B cell (primary cell): ENCODE measurements at regions of chr16 and their contacts with region 1.

Region 1: DNA sequence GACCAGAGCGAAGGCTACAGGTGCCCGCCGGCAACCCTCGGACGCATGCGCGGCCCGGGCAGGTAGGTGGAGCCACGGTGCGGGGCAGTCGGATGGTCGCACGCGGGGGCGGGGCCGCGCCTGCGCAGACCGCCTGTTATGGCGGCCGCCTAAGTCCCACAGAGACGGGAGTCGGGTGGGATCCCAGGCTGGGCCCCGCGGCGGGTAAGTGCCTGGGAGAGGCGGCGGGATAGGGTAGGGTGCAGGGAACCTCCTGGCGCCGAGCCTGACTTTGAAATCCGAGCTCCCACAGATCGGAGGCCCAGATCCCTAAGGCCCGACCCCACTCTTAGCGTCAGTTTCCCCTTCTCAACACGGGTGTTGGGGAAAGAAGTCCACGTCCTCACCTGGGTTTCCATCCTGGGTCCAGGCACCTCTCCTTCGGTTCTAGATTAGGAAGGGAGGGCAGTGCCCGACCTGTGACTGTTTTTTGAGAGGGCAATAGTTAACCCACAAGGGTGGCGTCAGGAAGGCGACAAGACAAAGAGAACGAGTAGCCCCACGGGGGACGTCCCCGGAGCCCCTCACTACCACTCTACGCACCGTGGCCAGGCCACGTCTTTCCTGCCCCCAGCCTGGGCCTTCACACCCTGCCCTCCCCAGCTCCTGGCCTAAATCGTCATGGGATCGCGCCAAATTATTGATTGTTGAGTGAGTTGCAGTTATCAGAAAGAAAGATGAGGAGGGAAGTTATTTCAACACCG is at the start of gene METTL22:
- DNase-seq: peak; percentile 94
- ATAC-seq: peak; percentile 99
- H3K4me3 ChIP-seq: peak within 1 kb of the TSS; percentile 88 to 100 (median 98)
- H3K4me3 Mint-ChIP-seq: peak within 1 kb of the TSS; percentile 94
- H3K27ac ChIP-seq: peak within 1 kb of the TSS; percentile 75 to 86
- H3K27ac Mint-ChIP-seq: peak within 1 kb of the TSS; percentile 86
- H3K4me1 ChIP-seq: peaks cover 12 to 15% of the 10 kb centered on the region in 2 donors
- H3K4me1 Mint-ChIP-seq: peaks cover 21% of the 10 kb centered on the region
- H3K27me3 ChIP-seq: peaks cover 0 to 6% (median 0%) of the 10 kb centered on the region in 4 experiments
- H3K27me3 Mint-ChIP-seq: peaks cover 9% of the 10 kb centered on the region
- CTCF ChIP-seq: no peak
- total RNA-seq, gene METTL22: 62.9 and 73.8 TPM in 2 replicates

Region 2: GRCh38 chr16:8567750-8568617 is 53.8 kb before region 1 on chr16:
- CTCF ChIA-PET with region 1: no interaction called
- POLR2A ChIA-PET with region 1: no interaction called
- intact Hi-C with region 1: loop called (anchors 1 kb)
- DNase-seq: peak; percentile 86
- ATAC-seq: peak; percentile 93
- H3K4me3 ChIP-seq: no peak overlapping the region
- H3K4me3 Mint-ChIP-seq: no peak overlapping the region
- H3K27ac ChIP-seq: no peak overlapping the region
- H3K27ac Mint-ChIP-seq: peak overlapping the region; percentile 34
- H3K4me1 ChIP-seq: peaks cover 0 to 6% of the 10 kb centered on the region in 2 donors
- H3K4me1 Mint-ChIP-seq: peaks cover 7% of the 10 kb centered on the region
- H3K27me3 ChIP-seq: peaks cover 0 to 3% (median 0%) of the 10 kb centered on the region in 4 experiments
- H3K27me3 Mint-ChIP-seq: peaks cover 16% of the 10 kb centered on the region
- CTCF ChIP-seq: peak; percentile 100

Region 3: GRCh38 chr16:8674413-8675022 is 52.8 kb after region 1 on chr16 and contains the start of gene ABAT:
- CTCF ChIA-PET with region 1: no interaction called
- POLR2A ChIA-PET with region 1: no interaction called
- intact Hi-C with region 1: loop called (anchors 1 kb)
- DNase-seq: peak; percentile 90
- ATAC-seq: peak; percentile 100
- H3K4me3 ChIP-seq: peak within 1 kb of the TSS; percentile 71 to 99 (median 81)
- H3K4me3 Mint-ChIP-seq: peak within 1 kb of the TSS; percentile 92
- H3K27ac ChIP-seq: peak within 1 kb of the TSS; percentile 51 to 83
- H3K27ac Mint-ChIP-seq: peak within 1 kb of the TSS; percentile 86
- H3K4me1 ChIP-seq: peaks cover 17 to 18% of the 10 kb centered on the region in 2 donors
- H3K4me1 Mint-ChIP-seq: peaks cover 24% of the 10 kb centered on the region
- H3K27me3 ChIP-seq: no peaks in the 10 kb centered on the region
- H3K27me3 Mint-ChIP-seq: no peaks in the 10 kb centered on the region
- CTCF ChIP-seq: no peak
- total RNA-seq, gene ABAT: 13.8 and 14.3 TPM in 2 replicates

Region 4: DNA sequence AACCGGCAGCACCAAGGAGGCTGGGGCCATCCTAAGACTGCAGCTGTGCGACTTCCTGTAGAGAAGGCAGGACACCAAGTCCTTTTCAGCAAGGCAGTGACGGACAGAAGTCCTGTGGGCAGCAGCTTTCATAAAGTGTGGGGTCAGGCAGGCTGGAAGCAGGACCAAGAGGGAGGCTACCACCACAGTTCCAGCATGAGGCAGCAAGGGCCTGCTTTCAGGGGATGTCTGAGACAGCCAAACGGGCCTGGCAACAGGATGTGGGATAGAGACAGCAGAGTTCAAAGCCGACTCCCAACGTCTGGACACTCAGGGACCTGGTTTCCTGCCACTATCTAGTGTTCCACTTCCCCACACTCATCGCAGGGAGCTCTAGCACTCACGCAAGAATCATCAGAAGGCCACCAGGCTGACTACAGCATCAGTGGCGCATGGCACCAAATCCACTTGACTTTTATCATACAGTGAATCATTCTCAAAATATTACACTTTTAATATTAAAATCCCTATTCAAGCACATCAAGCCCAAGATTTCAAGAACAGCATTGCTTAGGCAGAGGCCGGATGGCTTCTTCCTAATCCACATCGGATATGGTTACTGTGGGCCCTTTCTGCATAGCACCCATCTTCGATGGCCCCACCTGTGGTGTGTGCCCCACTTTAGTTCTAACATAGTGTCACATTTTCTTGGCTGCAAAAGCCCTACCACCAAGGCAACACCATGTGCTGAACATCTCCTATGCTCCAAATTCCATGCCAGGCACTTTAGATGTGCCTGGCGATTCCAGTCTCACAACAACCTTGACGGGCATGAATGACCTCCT is 336.8 kb after region 1 on chr16:
- CTCF ChIA-PET with region 1: no interaction called
- POLR2A ChIA-PET with region 1: no interaction called
- intact Hi-C with region 1: loop called (anchors 5 kb)
- DNase-seq: no peak
- ATAC-seq: no peak
- H3K4me3 ChIP-seq: peak overlapping the region in 2 of 5 experiments; percentile 3 to 17
- H3K4me3 Mint-ChIP-seq: peak overlapping the region; percentile 90
- H3K27ac ChIP-seq: peak overlapping the region in 1 of 2 donors; percentile 89
- H3K27ac Mint-ChIP-seq: peak overlapping the region; percentile 85
- H3K4me1 ChIP-seq: peaks cover 72 to 80% of the 10 kb centered on the region in 2 donors
- H3K4me1 Mint-ChIP-seq: peaks cover 76% of the 10 kb centered on the region
- H3K27me3 ChIP-seq: no peaks in the 10 kb centered on the region
- H3K27me3 Mint-ChIP-seq: no peaks in the 10 kb centered on the region
- CTCF ChIP-seq: no peak